ENCODE measurements at regions of chr11 and their contacts with region 1.

Region 1: GRCh38 chr11:92886243-92886905 is 83.1 kb upstream of the MTNR1B start:
- DNase-seq: peak; percentile 67
- H3K4me3 ChIP-seq: no peak overlapping the region
- H3K27ac ChIP-seq: no peak overlapping the region
- H3K4me1 ChIP-seq: no peaks in the 10 kb centered on the region
- H3K27me3 ChIP-seq: no peaks in the 10 kb centered on the region
- CTCF ChIP-seq: peak; percentile 13 to 56 (median 51)
- POLR2A ChIP-seq: no peak

Region 2: GRCh38 chr11:92211576-92212167 is 674.7 kb before region 1 on chr11:
- intact Hi-C with region 1: loop called (anchors 10 kb)
- DNase-seq: peak; percentile 54
- H3K4me3 ChIP-seq: no peak overlapping the region
- H3K27ac ChIP-seq: no peak overlapping the region
- H3K4me1 ChIP-seq: no peaks in the 10 kb centered on the region
- H3K27me3 ChIP-seq: no peaks in the 10 kb centered on the region
- CTCF ChIP-seq: no peak
- POLR2A ChIP-seq: no peak

Region 3: GRCh38 chr11:92240916-92241315 is 645.5 kb before region 1 on chr11:
- intact Hi-C with region 1: no loop called
- DNase-seq: no peak
- H3K4me3 ChIP-seq: no peak overlapping the region
- H3K27ac ChIP-seq: no peak overlapping the region
- H3K4me1 ChIP-seq: no peaks in the 10 kb centered on the region
- H3K27me3 ChIP-seq: no peaks in the 10 kb centered on the region
- CTCF ChIP-seq: no peak
- POLR2A ChIP-seq: no peak

Region 4: DNA sequence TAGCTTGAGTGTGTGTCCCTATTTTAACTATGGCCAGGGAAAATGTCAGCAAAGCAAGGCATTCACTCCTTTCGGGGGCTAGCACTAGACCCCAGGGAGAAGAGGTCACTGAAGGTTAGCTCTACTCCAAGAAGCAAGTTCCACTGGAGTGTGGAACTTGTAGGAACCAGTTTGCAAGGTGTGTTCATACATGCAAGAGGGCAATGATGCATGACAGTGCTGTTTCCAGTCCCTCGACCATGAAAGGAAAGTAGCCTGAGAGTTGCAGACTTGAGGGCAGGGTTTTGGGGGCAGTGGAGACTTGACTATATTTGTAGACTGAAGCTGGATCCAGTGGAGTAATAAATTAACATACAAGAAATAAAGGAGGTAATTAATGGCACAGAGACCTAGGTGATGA is 333.1 kb after region 1 on chr11:
- intact Hi-C with region 1: no loop called
- DNase-seq: no peak
- H3K4me3 ChIP-seq: no peak overlapping the region
- H3K27ac ChIP-seq: no peak overlapping the region
- H3K4me1 ChIP-seq: no peaks in the 10 kb centered on the region
- H3K27me3 ChIP-seq: no peaks in the 10 kb centered on the region
- CTCF ChIP-seq: no peak
- POLR2A ChIP-seq: no peak